ENCODE measurements at regions of chr4 and their contacts with region 1.

Region 1: GRCh38 chr4:48445704-48446103 is 37.4 kb upstream of the SLC10A4 start:
- DNase-seq: no peak
- H3K4me3 ChIP-seq: no peak overlapping the region
- H3K4me3 Mint-ChIP-seq: no peak overlapping the region
- H3K27ac Mint-ChIP-seq: no peak overlapping the region
- H3K4me1 ChIP-seq: peaks cover 9% of the 10 kb centered on the region
- H3K4me1 Mint-ChIP-seq: peaks cover 10% of the 10 kb centered on the region
- H3K27me3 ChIP-seq: no peaks in the 10 kb centered on the region
- H3K27me3 Mint-ChIP-seq: no peaks in the 10 kb centered on the region
- CTCF ChIP-seq: peak; percentile 33 to 58

Region 2: DNA sequence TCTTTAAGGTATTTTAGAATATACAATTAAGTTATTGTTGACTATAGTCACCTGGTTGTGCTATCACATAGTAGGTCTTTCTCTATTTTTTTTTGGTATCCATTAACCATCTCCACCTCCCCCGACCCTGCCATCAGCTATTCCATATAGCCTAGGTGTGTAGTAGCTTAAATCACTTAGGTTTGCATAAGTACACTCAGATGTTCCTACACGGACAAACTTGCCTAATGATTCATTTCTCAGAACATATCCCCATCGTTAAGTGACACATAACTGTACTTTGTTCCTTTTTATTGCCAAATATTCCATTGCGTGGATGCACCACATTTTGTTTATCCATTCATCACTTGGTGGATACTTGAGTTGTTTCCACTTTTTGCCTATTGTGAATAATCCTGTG is 36.5 kb before region 1 on chr4:
- CTCF ChIA-PET with region 1: no interaction called
- POLR2A ChIA-PET with region 1: no interaction called
- intact Hi-C with region 1: no loop called
- DNase-seq: no peak
- H3K4me3 ChIP-seq: no peak overlapping the region
- H3K4me3 Mint-ChIP-seq: no peak overlapping the region
- H3K27ac Mint-ChIP-seq: no peak overlapping the region
- H3K4me1 ChIP-seq: no peaks in the 10 kb centered on the region
- H3K4me1 Mint-ChIP-seq: no peaks in the 10 kb centered on the region
- H3K27me3 ChIP-seq: no peaks in the 10 kb centered on the region
- H3K27me3 Mint-ChIP-seq: no peaks in the 10 kb centered on the region
- CTCF ChIP-seq: no peak

Region 3: GRCh38 chr4:48499551-48500066 is 53.9 kb after region 1 on chr4:
- CTCF ChIA-PET with region 1: no interaction called
- POLR2A ChIA-PET with region 1: no interaction called
- intact Hi-C with region 1: loop called (anchors 10 kb)
- DNase-seq: no peak
- H3K4me3 ChIP-seq: no peak overlapping the region
- H3K4me3 Mint-ChIP-seq: no peak overlapping the region
- H3K27ac Mint-ChIP-seq: no peak overlapping the region
- H3K4me1 ChIP-seq: peaks cover 8% of the 10 kb centered on the region
- H3K4me1 Mint-ChIP-seq: no peaks in the 10 kb centered on the region
- H3K27me3 ChIP-seq: no peaks in the 10 kb centered on the region
- H3K27me3 Mint-ChIP-seq: no peaks in the 10 kb centered on the region
- CTCF ChIP-seq: no peak

Region 4: DNA sequence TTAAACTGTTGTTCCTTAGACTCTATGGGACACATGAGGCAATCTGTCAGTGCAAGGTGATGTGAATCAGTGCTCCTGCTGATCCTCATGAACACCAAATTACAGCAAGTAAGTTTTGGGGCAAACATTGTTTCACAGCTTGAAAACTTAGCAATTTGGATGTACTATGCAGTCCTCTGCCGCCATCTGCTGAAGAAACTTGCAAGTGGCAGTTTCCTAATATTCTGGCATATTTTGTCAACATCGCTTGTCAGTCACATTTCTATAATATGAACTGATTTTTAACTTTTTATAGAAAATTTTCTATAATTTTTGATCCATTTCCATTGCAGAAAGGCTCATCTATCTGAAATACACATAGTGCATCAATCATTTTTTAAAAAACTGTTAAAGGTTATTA is 100.6 kb after region 1 on chr4:
- CTCF ChIA-PET with region 1: no interaction called
- POLR2A ChIA-PET with region 1: no interaction called
- intact Hi-C with region 1: loop called (anchors 2 kb)
- DNase-seq: peak; percentile 40 to 43
- H3K4me3 ChIP-seq: no peak overlapping the region
- H3K4me3 Mint-ChIP-seq: no peak overlapping the region
- H3K27ac Mint-ChIP-seq: no peak overlapping the region
- H3K4me1 ChIP-seq: no peaks in the 10 kb centered on the region
- H3K4me1 Mint-ChIP-seq: no peaks in the 10 kb centered on the region
- H3K27me3 ChIP-seq: no peaks in the 10 kb centered on the region
- H3K27me3 Mint-ChIP-seq: no peaks in the 10 kb centered on the region
- CTCF ChIP-seq: peak; percentile 66 to 73